ENCODE measurements at regions of chr7 and their contacts with region 1.

Region 1: GRCh38 chr7:78039790-78040776 is 241.5 kb downstream of the PHTF2 start:
- DNase-seq: peak; percentile 68
- ATAC-seq: peak; percentile 93
- H3K4me3 Mint-ChIP-seq: no peak overlapping the region
- H3K27ac Mint-ChIP-seq: no peak overlapping the region
- H3K4me1 Mint-ChIP-seq: peaks cover 3% of the 10 kb centered on the region
- H3K27me3 Mint-ChIP-seq: peaks cover 20% of the 10 kb centered on the region
- CTCF ChIP-seq: peak; percentile 97

Region 2: DNA sequence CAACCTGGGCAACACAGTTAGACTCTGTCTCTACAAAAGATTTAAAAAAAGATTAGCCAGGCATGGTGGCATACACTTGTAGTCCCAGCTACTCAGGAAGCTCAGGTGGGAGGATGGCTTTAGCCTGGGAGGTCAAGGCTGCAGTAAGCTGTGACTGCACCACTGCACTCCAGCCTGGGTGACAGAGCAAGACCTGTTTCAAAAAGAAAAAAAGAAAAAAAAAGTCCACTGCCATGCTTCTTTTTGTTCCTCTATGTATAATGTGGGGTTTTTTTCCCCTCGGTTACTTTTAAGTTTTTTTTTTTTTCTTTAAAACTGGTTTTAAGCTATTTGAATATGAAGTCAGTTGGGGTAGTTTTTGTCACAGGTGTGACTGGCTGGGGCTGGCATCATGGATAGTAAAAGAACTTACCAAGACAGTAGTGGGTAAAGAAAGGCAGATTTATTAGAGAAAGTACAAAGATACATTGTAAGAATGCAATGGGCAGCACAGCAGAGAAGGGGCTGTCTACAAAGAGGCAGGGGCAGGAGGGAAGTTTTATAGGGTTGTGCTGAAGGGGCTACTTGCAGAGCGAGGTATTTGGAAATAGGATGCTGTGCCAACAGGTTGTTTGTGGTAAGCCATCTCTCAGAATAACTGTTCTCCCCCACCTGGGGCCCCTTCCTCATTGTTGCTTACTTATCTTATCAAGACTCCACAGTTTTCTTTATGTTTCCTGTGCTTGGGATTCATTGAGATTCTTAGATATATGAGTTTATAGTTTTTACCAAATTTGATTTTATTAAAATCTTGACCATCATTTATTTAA is 64.2 kb before region 1 on chr7:
- CTCF ChIA-PET with region 1: no interaction called
- POLR2A ChIA-PET with region 1: no interaction called
- intact Hi-C with region 1: no loop called
- DNase-seq: no peak
- ATAC-seq: no peak
- H3K4me3 Mint-ChIP-seq: no peak overlapping the region
- H3K27ac Mint-ChIP-seq: no peak overlapping the region
- H3K4me1 Mint-ChIP-seq: no peaks in the 10 kb centered on the region
- H3K27me3 Mint-ChIP-seq: peaks cover 7% of the 10 kb centered on the region
- CTCF ChIP-seq: no peak

Region 3: DNA sequence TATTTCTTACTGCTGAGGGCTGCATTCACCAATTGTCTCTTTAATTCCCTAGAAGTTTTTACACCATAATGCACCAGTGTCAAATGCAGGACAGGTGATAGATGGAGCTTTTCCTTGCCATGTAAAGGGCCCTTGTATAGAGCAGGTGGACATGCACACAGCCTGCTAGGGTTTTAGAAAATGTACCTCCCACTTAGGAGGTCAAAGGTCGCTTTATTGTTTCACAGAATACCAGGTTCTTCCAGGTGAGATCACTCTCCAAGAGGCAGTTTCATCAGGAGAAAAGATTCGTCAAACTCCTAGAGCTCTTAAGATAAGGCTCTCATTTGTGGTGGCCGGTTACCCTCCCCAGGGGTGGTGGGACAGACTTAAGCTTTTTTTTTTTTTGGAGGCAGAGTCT is 25.7 kb before region 1 on chr7:
- CTCF ChIA-PET with region 1: interaction called, 93 read pairs
- POLR2A ChIA-PET with region 1: no interaction called
- intact Hi-C with region 1: no loop called
- DNase-seq: no peak
- ATAC-seq: no peak
- H3K4me3 Mint-ChIP-seq: no peak overlapping the region
- H3K27ac Mint-ChIP-seq: no peak overlapping the region
- H3K4me1 Mint-ChIP-seq: no peaks in the 10 kb centered on the region
- H3K27me3 Mint-ChIP-seq: peaks cover 21% of the 10 kb centered on the region
- CTCF ChIP-seq: no peak

Region 4: GRCh38 chr7:78020136-78020873 is 19.8 kb before region 1 on chr7:
- CTCF ChIA-PET with region 1: interaction called, 93 read pairs
- POLR2A ChIA-PET with region 1: no interaction called
- intact Hi-C with region 1: no loop called
- DNase-seq: peak; percentile 37
- ATAC-seq: peak; percentile 50
- H3K4me3 Mint-ChIP-seq: peak overlapping the region; percentile 63
- H3K27ac Mint-ChIP-seq: no peak overlapping the region
- H3K4me1 Mint-ChIP-seq: peaks cover 5% of the 10 kb centered on the region
- H3K27me3 Mint-ChIP-seq: peaks cover 27% of the 10 kb centered on the region
- CTCF ChIP-seq: peak; percentile 74

Region 5: DNA sequence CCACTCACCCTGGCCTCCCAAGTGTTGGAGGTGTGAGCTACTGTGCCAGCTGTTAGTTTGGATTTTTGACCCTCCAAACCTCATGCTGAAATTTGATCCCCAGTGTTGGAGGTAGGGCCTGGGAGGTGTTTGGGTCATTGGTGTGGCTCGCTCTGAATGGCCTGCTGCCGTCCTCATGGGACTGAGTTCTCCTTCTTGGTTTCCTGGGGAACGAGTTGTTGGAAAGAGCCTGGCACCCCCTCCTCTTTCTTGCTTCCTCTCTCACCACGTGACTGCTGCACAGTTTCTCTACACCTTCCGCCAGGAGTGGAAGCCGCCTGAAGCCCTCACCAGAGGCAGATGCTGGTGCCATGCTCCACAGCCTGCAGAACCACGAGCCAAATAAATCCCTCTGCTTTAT is 12.0 kb after region 1 on chr7:
- CTCF ChIA-PET with region 1: interaction called, 21 read pairs
- POLR2A ChIA-PET with region 1: interaction called, 3 read pairs
- intact Hi-C with region 1: no loop called
- DNase-seq: no peak
- ATAC-seq: no peak
- H3K4me3 Mint-ChIP-seq: no peak overlapping the region
- H3K27ac Mint-ChIP-seq: no peak overlapping the region
- H3K4me1 Mint-ChIP-seq: no peaks in the 10 kb centered on the region
- H3K27me3 Mint-ChIP-seq: peaks cover 7% of the 10 kb centered on the region
- CTCF ChIP-seq: no peak

Measured in activated CD8-positive, alpha-beta T cell treated with anti-CD3 and anti-CD28 coated beads for 36 hours (primary cell).